Activated CD8-positive, alpha-beta T cell treated with anti-CD3 and anti-CD28 coated beads for 36 hours (primary cell): ENCODE measurements at regions of chr3 and their contacts with region 1.

Region 1: GRCh38 chr3:56801662-56802377 is at the start of gene ARHGEF3:
- DNase-seq: peak; percentile 89
- ATAC-seq: peak; percentile 82
- H3K4me3 Mint-ChIP-seq: peak within 1 kb of the TSS; percentile 87
- H3K27ac Mint-ChIP-seq: peak within 1 kb of the TSS; percentile 91
- H3K4me1 Mint-ChIP-seq: peaks cover 24% of the 10 kb centered on the region
- H3K27me3 Mint-ChIP-seq: no peaks in the 10 kb centered on the region
- CTCF ChIP-seq: peak; percentile 61
- total RNA-seq, gene ARHGEF3: 63.0 to 66.5 TPM

Region 2: DNA sequence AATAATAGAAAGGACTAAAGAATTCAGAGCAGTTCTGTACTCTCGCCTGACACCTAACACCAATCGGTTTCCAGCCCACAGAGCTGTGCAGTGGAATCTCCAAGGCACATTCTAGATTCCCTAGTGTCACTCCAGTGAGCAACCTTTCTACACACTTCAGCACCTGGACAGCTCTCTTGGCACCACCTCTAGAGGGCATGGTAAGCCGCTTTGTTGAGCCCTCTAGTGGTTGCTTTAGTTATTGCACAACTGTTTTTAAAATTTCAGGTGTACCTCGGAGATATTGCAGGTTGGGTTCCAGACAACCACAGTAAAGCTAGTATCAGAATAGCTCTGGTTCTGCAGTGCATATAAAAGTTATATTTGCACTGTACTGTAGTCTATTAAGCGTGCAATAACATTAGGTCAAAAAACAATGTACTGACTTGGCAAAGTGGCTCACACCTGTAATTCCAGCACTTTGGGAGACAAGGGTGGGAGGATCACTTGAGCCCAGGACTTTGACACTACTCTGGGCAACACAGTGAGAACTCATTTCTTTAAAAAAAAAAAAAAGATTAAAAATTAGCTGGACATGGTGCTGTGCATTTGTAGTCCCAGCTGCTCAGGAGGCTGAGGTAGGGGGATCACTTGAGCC is 307.0 kb before region 1 on chr3:
- CTCF ChIA-PET with region 1: no interaction called
- POLR2A ChIA-PET with region 1: no interaction called
- intact Hi-C with region 1: no loop called
- DNase-seq: peak; percentile 82
- ATAC-seq: peak; percentile 94
- H3K4me3 Mint-ChIP-seq: no peak overlapping the region
- H3K27ac Mint-ChIP-seq: no peak overlapping the region
- H3K4me1 Mint-ChIP-seq: no peaks in the 10 kb centered on the region
- H3K27me3 Mint-ChIP-seq: peaks cover 12% of the 10 kb centered on the region
- CTCF ChIP-seq: peak; percentile 88

Region 3: DNA sequence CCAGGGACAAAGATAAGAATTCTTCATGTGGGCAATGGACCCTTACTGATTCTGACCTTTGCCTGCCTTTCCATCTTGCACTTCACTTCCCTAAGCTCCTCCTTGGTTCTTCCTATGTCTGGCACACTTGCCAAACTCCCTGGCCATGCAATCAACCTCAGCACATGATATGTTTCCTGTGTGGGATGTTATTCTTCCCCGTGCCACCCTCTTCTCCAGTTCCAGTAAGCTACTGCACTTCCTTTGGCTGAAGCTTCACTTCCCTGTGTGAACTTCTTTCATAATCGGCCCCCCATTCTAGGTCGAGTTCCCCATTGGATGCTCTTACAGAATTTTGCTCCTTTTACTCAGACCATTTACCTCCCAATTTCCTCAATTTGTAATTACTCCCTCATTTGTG is 108.1 kb before region 1 on chr3:
- CTCF ChIA-PET with region 1: interaction called, 38 read pairs
- POLR2A ChIA-PET with region 1: interaction called, 6 read pairs
- intact Hi-C with region 1: no loop called
- DNase-seq: no peak
- ATAC-seq: no peak
- H3K4me3 Mint-ChIP-seq: peak overlapping the region; percentile 79
- H3K27ac Mint-ChIP-seq: peak overlapping the region; percentile 27
- H3K4me1 Mint-ChIP-seq: peaks cover 44% of the 10 kb centered on the region
- H3K27me3 Mint-ChIP-seq: no peaks in the 10 kb centered on the region
- CTCF ChIP-seq: no peak

Region 4: DNA sequence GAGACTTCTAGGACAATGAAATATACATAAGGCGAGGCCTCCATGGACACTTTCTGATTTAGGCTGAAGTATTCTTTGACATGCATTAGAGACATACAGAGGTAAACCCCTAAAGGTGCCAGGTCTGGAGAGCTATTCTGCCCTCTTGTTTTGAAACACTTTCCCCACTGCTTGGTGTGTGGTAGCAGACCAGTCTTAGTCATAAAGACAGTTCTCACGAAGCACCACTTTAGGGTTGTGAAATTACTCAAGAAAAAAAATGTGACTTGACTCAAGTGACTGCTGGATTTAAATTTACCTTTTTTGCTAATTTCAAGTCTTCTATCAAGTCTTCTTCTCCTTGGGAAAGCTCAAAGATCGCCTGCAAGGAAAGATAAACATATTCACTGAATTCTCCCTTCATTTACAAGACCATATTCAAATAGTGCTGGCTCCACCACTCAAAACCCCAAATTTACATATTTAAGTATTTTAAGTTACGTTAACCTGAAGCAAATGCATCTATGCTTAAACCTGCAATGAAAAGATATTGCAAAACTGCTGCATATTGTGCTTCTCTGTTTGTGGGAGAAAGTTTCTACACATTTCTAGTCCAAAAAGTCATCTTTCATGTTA is 48.5 kb before region 1 on chr3:
- CTCF ChIA-PET with region 1: interaction called, 127 read pairs
- POLR2A ChIA-PET with region 1: interaction called, 44 read pairs
- intact Hi-C with region 1: loop called (anchors 2 kb)
- DNase-seq: peak; percentile 75
- ATAC-seq: peak; percentile 93
- H3K4me3 Mint-ChIP-seq: no peak overlapping the region
- H3K27ac Mint-ChIP-seq: peak overlapping the region; percentile 73
- H3K4me1 Mint-ChIP-seq: peaks cover 63% of the 10 kb centered on the region
- H3K27me3 Mint-ChIP-seq: no peaks in the 10 kb centered on the region
- CTCF ChIP-seq: no peak

Region 5: DNA sequence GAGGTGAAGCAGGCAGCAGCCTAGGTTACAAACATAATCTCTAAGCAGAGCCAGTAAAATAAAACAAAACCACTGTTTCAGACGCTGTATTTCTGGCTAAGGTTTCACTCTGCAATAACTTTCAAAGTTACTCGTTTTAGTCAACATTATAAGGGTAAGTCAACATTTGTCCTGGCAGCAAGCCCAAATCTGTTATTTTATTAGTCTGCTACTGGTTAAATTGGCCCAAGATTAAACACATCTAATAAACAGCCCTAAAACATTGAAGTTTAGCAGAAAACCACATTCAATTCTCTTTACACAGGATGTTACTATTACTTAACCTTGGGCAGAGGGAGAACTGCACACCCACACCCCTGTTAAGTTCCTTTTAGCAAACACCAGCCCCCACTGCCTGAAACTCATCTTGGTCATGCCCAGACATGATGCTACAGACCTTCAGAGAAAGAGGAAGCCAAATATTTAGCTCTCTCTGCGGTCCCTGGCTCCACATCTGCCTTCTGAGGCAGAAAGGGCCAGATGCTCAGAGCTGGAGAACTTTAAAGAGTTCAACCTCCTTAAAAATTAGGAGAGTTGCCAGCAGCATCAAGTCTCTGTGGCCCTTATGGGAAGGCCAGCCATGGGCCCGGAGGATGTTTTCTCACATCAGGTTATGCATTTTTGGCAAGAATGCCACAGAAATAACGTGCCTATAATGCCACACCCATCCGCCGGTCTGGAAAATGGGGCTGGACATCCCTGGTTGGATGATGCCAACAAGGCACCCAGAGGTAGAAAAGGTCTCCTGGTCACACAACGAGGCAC is 18.0 kb before region 1 on chr3:
- CTCF ChIA-PET with region 1: interaction called, 212 read pairs
- POLR2A ChIA-PET with region 1: interaction called, 44 read pairs
- intact Hi-C with region 1: no loop called
- DNase-seq: peak; percentile 90
- ATAC-seq: peak; percentile 82
- H3K4me3 Mint-ChIP-seq: peak overlapping the region; percentile 70
- H3K27ac Mint-ChIP-seq: peak overlapping the region; percentile 92
- H3K4me1 Mint-ChIP-seq: peaks cover 95% of the 10 kb centered on the region
- H3K27me3 Mint-ChIP-seq: no peaks in the 10 kb centered on the region
- CTCF ChIP-seq: no peak

Region 6: DNA sequence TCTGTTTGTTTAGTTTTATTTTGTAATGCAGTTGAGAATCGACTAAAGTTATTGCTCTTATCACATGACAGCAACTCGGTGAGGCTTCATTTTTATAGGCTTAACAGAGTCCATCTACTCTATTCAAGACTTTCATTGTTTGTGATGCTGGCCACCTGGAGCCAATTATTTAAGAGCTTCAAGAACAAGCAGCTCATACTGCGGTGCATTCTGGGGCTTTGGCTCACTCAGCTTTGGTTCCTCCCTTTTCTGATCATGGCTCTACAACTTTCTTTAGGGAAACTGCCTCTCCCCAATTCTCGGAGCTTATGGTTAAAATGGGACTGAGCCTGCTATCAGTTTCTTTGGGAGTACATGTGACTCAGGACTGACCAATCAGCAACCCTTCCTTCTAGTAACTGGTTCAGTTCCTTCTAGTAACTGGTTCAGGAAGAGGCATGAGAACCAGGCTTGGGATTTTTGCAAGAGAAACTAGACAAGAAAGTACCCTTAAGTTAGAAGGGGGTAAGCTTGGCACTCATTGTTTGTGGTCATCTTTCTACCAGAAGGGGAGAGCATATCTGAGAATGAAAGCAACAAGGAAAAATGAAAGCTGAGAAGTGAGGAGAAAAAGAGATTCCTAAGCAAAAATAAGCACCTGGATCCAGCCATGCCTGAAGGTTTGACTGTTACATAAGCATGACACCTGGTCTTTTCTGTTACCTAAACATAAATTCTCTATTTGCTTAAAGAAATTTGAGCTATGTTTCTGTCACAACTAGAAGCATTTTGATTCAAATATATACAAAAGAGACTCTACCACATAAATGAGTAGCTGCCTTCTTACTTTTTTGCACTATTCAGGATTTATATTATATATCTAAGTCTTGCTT is 24.0 kb after region 1 on chr3:
- CTCF ChIA-PET with region 1: interaction called, 21 read pairs
- POLR2A ChIA-PET with region 1: interaction called, 3 read pairs
- intact Hi-C with region 1: no loop called
- DNase-seq: no peak
- ATAC-seq: no peak
- H3K4me3 Mint-ChIP-seq: no peak overlapping the region
- H3K27ac Mint-ChIP-seq: no peak overlapping the region
- H3K4me1 Mint-ChIP-seq: peaks cover 44% of the 10 kb centered on the region
- H3K27me3 Mint-ChIP-seq: no peaks in the 10 kb centered on the region
- CTCF ChIP-seq: no peak

Region 7: DNA sequence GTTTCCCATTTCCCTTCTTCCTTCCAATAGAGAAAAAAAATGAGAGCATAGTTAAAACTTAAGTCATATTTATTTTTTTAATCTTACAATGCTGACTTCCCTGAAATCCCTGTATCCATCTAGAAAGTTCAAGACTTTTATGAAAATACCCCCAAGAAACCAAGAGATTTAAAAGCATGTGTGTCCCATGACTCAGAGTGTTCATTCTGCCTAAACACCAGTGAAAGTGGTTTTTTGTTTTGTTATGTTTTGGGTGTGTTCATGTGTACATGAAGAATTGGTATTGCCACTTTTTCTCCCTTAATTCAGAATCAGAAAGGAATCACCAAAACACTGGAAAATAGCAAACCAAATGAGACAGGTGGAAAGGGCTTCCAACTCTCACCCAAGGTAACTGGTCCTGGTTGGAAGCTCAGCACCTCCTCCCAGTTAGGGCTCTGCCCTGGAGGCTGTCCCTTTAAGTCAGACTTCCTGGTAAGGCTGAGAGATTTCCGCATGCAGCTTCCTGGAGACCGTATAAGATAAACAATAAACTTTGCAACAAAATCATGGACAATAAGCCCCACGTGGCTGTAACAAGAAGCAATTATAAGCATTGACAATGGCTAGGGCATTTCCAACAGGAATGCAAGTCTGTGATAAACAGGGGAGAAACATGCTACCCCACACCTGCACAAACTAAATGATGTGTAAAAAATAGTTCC is 121.9 kb after region 1 on chr3:
- CTCF ChIA-PET with region 1: interaction called, 72 read pairs
- POLR2A ChIA-PET with region 1: interaction called, 25 read pairs
- intact Hi-C with region 1: loop called (anchors 5 kb)
- DNase-seq: no peak
- ATAC-seq: peak; percentile 14
- H3K4me3 Mint-ChIP-seq: peak overlapping the region; percentile 40
- H3K27ac Mint-ChIP-seq: peak overlapping the region; percentile 77
- H3K4me1 Mint-ChIP-seq: peaks cover 81% of the 10 kb centered on the region
- H3K27me3 Mint-ChIP-seq: no peaks in the 10 kb centered on the region
- CTCF ChIP-seq: no peak

Region 8: GRCh38 chr3:57206423-57206822 is 404.6 kb after region 1 on chr3:
- CTCF ChIA-PET with region 1: no interaction called
- POLR2A ChIA-PET with region 1: no interaction called
- intact Hi-C with region 1: no loop called
- DNase-seq: no peak
- ATAC-seq: no peak
- H3K4me3 Mint-ChIP-seq: no peak overlapping the region
- H3K27ac Mint-ChIP-seq: no peak overlapping the region
- H3K4me1 Mint-ChIP-seq: no peaks in the 10 kb centered on the region
- H3K27me3 Mint-ChIP-seq: no peaks in the 10 kb centered on the region
- CTCF ChIP-seq: no peak